GM12878 (cell line): ENCODE measurements at regions of chr12 and their contacts with region 1.

Region 1: DNA sequence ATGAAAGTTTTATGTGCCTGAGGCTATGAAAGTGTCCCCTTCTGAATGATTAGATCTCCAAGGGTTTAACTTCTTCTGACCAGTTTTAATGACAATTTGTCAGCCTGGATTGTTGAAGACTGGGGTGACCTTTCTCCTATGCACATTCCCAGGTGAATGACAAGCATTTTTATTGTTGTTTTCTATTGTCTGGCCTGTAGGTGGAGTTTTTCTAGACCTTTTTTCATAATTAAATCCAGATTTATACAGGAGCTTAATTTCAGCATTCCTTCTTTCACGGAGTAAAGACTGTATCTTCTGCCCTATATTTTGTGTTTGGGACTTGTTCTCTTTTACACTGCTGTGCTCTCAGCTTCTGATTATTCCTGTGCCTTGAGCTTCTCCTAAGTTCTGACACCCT is 125.0 kb upstream of the FAR2 start:
- DNase-seq: no peak
- ATAC-seq: no peak
- H3K4me3 ChIP-seq: no peak overlapping the region
- H3K27ac ChIP-seq: no peak overlapping the region
- H3K4me1 ChIP-seq: no peaks in the 10 kb centered on the region
- H3K27me3 ChIP-seq: no peaks in the 10 kb centered on the region
- CTCF ChIP-seq: peak in 1 of 3 experiments; percentile 8; a peak in 2 of 6 replicates
- EP300 ChIP-seq: no peak
- POLR2A ChIP-seq: no peak
- RAD21 ChIP-seq: no peak

Region 2: DNA sequence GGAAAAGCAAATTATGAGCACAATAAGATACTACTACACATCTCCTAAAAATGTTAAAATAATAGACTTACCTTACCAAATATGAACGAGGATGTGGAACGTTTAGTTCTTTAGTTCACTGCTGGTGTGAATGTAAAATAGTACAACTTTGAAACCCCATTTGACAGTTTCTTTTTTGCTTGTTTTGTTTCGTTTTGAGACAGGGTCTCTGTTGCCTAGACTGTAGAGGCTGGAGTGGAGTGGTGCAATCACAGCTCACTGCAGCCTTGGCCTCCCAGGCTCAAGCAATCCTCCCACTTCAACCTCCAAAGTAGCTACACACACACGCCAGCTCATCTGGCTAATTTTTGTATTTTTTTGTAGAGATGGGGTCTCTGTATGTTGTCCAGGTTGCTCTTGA is 11.4 kb before region 1 on chr12:
- CTCF ChIA-PET with region 1: interaction called, 11 read pairs
- POLR2A ChIA-PET with region 1: no interaction called
- RAD21 ChIA-PET with region 1: no interaction called
- SMC1A ChIA-PET with region 1: interaction called, 4 read pairs
- in situ Hi-C with region 1: no loop called
- intact Hi-C with region 1: no loop called
- DNase-seq: no peak
- ATAC-seq: peak; percentile 80
- H3K4me3 ChIP-seq: no peak overlapping the region
- H3K27ac ChIP-seq: no peak overlapping the region
- H3K4me1 ChIP-seq: no peaks in the 10 kb centered on the region
- H3K27me3 ChIP-seq: 0 out of 4 replicates have a peak, but pooled peaks cover 0 to 2% of the 10 kb centered on the region in 2 experiments
- CTCF ChIP-seq: no peak
- EP300 ChIP-seq: no peak
- POLR2A ChIP-seq: no peak
- RAD21 ChIP-seq: no peak

Region 3: DNA sequence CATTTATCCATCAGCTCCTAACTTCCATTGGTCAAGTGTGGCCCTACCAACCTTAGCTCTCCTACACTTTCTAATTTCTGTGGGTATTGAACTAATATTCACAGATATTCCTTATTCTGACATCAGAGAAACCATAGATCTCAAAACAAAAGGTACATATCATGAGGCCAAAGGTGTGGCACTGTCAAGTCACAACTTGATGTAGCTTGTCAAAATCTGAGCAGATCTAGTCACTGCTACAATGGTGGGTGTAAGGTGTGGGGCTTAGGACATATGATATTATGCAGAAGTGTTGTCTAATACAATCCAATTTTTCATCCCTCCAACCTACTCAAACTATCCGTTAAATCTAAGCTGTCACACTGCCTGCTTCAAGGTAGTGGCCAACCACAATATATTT is 11.0 kb after region 1 on chr12:
- CTCF ChIA-PET with region 1: interaction called, 10 read pairs
- POLR2A ChIA-PET with region 1: interaction called, 3 read pairs
- RAD21 ChIA-PET with region 1: no interaction called
- SMC1A ChIA-PET with region 1: interaction called, 7 read pairs
- in situ Hi-C with region 1: no loop called
- intact Hi-C with region 1: no loop called
- DNase-seq: no peak
- ATAC-seq: no peak
- H3K4me3 ChIP-seq: no peak overlapping the region
- H3K27ac ChIP-seq: no peak overlapping the region
- H3K4me1 ChIP-seq: no peaks in the 10 kb centered on the region
- H3K27me3 ChIP-seq: no peaks in the 10 kb centered on the region
- CTCF ChIP-seq: no peak
- EP300 ChIP-seq: no peak
- POLR2A ChIP-seq: no peak
- RAD21 ChIP-seq: no peak